ENCODE measurements at regions of chr12 and their contacts with region 1.

Region 1: GRCh38 chr12:6285063-6285477 is 25.4 kb upstream of the PLEKHG6 start:
- DNase-seq: peak; percentile 89
- H3K4me3 Mint-ChIP-seq: no peak overlapping the region
- H3K27ac Mint-ChIP-seq: peak overlapping the region; percentile 21
- H3K4me1 Mint-ChIP-seq: peaks cover under 1% of the 10 kb centered on the region
- H3K27me3 Mint-ChIP-seq: peaks cover 19% of the 10 kb centered on the region

Region 2: GRCh38 chr12:5988659-5989116 is 296.4 kb before region 1 on chr12:
- intact Hi-C with region 1: loop called (anchors 1 kb)
- DNase-seq: peak; percentile 91
- H3K4me3 Mint-ChIP-seq: no peak overlapping the region
- H3K27ac Mint-ChIP-seq: no peak overlapping the region
- H3K4me1 Mint-ChIP-seq: peaks cover 2% of the 10 kb centered on the region
- H3K27me3 Mint-ChIP-seq: peaks cover 3% of the 10 kb centered on the region

Region 3: DNA sequence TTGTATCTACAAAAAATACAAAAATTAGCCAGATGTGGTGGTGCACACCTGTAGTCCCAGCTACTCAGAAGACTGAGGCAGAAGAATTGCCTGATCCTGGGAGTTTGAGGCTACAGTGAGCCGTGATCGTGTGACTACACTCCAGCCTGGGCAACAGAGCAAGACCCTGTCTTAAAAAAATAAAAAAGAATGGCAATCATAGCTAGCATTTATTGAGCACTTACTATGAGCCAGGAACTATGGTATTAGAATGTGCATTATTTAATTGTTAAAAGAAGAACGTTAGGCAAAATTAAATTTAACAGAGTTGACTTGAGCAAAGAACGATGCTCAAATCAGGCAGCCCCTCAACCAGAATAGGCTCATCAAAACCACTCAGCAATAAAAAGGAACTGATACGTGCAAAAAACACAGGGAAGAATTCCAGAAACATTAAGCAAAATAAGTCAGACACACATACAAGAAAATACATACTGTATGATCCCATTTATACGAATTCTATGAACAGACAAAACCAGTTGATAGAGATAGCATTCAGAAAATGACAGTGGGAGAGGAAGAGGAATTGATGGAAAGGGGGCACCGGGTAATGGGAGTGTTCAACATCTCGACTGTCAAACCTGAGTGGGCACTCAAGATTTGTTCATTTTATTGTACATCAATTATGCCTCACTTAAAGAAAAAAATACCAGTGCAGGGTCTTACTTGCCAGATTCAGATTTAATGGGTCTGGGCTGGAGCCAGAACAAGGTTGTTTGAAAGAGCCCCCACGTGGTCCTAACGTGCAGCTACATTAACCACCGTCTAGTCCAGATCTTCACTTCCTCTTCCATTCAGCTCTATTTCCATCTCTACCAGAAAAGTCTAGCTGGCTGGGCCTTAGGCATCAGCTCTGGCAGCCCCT is 82.2 kb after region 1 on chr12:
- intact Hi-C with region 1: no loop called
- DNase-seq: peak; percentile 74
- H3K4me3 Mint-ChIP-seq: no peak overlapping the region
- H3K27ac Mint-ChIP-seq: peak overlapping the region; percentile 29
- H3K4me1 Mint-ChIP-seq: peaks cover 25% of the 10 kb centered on the region
- H3K27me3 Mint-ChIP-seq: no peaks in the 10 kb centered on the region

Region 4: DNA sequence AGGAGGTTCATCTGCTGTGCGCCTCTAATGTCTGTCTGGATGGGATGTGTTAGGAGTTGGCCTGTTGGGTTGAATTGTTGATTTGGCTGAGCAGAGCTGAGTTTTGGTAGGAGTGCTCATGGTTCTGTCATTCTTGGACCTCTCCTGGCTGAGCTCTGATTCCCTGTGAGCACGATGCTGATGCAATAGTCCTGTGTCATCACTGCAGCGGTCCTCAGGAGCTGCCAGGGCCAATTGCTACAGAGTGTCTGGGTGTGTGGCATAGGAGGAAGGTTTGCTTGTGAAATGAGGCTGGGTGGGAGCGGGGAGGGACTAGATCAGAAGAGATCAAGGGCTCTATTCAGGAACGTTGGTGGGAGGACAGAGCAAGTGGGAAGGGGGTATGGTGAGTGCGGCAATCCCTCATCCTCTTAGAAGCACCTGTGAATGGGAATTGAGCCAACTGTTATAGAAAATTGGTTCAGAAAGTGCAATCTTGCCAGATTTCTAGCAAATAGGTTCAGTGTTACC is 925.6 kb after region 1 on chr12:
- intact Hi-C with region 1: no loop called
- DNase-seq: peak; percentile 17
- H3K4me3 Mint-ChIP-seq: no peak overlapping the region
- H3K27ac Mint-ChIP-seq: no peak overlapping the region
- H3K4me1 Mint-ChIP-seq: no peaks in the 10 kb centered on the region
- H3K27me3 Mint-ChIP-seq: no peaks in the 10 kb centered on the region

Measured in activated CD4-positive, alpha-beta T cell treated with anti-CD3 and anti-CD28 coated beads, Interleukin-2, amount 10 ng/mL, durations not matched to agents 24 days and 14 days (primary cell).